PC-9 (cell line): ENCODE measurements at regions of chr2 and their contacts with region 1.

Region 1: GRCh38 chr2:178193823-178194599 is at the start of gene OSBPL6:
- DNase-seq: peak; percentile 63 to 93
- H3K4me3 ChIP-seq: peak within 1 kb of the TSS; percentile 93
- H3K27ac ChIP-seq: no peak within 1 kb of the TSS
- H3K4me1 ChIP-seq: peaks cover 16% of the 10 kb centered on the region
- H3K27me3 ChIP-seq: peaks cover 24% of the 10 kb centered on the region; the same call in 1 of the 2 replicates
- CTCF ChIP-seq: no peak; the same call in 1 of the 2 replicates
- total RNA-seq, gene OSBPL6: 2.6 and 3.5 TPM in 2 replicates

Region 2: DNA sequence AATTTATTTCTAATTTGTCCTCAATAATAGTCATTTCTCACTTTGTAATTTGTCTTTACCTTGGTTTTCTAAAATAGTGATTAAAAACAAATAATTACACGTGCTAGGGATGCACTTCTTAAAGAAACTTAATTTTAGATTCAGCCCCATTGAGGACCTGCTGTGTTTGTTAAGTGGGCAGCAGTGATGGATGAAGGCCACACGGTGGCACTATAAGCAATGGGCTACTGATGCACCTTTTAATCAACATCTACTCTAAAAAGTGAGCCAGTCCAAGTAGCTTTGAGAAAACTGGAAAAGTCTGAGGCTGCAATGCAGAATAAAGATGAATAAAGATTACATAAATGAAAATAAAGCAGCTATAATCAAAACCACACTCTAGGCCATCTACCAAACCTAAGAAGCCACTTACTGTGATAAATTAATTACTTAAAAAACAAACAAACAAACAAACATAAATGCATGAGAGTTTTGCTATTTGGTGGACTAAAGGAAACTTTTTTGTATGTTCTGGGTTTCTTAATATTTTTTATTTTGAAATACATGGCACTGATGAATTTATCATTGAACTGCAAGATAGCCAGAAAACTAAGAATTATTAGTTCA is 210.7 kb before region 1 on chr2:
- CTCF ChIA-PET with region 1: no interaction called
- POLR2A ChIA-PET with region 1: no interaction called
- intact Hi-C with region 1: loop called (anchors 10 kb)
- DNase-seq: peak; percentile 43 to 56
- H3K4me3 ChIP-seq: no peak overlapping the region
- H3K27ac ChIP-seq: no peak overlapping the region
- H3K4me1 ChIP-seq: no peaks in the 10 kb centered on the region
- H3K27me3 ChIP-seq: no peaks in the 10 kb centered on the region
- CTCF ChIP-seq: peak; percentile 96

Region 3: DNA sequence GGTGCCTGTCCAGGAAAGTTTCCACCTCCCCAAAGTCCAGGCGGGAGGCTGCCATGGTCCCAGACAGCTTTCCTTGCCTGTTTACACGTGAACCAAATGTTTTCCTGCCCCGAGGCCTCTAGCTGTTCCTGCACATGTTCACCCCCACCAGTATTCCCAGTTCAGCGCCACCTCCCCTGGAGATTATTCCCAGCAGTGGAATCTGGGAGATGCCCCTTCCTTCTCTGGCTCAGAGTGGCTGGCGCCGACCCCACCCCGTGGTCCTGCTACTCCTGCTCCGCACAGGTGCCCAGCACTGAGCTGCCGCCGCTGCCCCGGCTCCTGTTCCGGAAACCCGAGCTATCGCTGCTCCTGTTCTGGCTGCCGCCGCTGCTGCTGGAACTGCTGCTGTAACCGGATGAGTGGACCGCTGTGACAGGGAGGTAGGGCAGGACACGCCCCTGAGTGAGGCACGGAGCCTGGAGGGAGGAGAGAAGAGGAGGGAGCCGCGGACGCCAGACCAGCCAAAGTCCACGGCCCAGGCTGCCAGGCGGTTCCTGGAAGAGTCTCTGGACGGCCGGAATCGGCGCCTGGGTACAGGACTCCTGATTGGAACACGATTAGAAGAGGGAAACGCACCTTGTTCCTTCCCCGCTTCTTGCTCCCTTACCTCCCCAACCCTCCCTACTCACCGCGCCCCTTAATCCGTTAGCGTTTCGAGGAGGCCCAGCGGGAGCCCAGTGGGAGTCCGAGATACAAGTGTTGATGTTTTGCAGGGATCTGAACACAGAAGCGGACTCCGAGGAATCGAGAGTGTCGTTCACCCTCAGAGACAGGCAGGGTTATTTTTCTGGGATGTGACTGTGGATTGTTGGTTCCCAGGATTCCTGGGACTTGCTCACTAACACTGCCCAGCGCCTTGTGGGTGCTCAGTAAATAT is 121.4 kb before region 1 on chr2 and contains the start of gene PDE11A:
- CTCF ChIA-PET with region 1: interaction called, 3 read pairs
- POLR2A ChIA-PET with region 1: no interaction called
- intact Hi-C with region 1: loop called (anchors 10 kb)
- DNase-seq: peak; percentile 85 to 94
- H3K4me3 ChIP-seq: peak within 1 kb of the TSS; percentile 64
- H3K27ac ChIP-seq: no peak within 1 kb of the TSS
- H3K4me1 ChIP-seq: peaks cover 27% of the 10 kb centered on the region
- H3K27me3 ChIP-seq: no peaks in the 10 kb centered on the region
- CTCF ChIP-seq: no peak
- total RNA-seq, gene PDE11A: 1.1 and 1.4 TPM in 2 replicates

Region 4: GRCh38 chr2:178128836-178129630 is 65.0 kb before region 1 on chr2:
- CTCF ChIA-PET with region 1: no interaction called
- POLR2A ChIA-PET with region 1: no interaction called
- intact Hi-C with region 1: loop called (anchors 2 kb)
- DNase-seq: no peak
- H3K4me3 ChIP-seq: no peak overlapping the region
- H3K27ac ChIP-seq: no peak overlapping the region
- H3K4me1 ChIP-seq: peaks cover 13% of the 10 kb centered on the region
- H3K27me3 ChIP-seq: no peaks in the 10 kb centered on the region
- CTCF ChIP-seq: no peak

Region 5: DNA sequence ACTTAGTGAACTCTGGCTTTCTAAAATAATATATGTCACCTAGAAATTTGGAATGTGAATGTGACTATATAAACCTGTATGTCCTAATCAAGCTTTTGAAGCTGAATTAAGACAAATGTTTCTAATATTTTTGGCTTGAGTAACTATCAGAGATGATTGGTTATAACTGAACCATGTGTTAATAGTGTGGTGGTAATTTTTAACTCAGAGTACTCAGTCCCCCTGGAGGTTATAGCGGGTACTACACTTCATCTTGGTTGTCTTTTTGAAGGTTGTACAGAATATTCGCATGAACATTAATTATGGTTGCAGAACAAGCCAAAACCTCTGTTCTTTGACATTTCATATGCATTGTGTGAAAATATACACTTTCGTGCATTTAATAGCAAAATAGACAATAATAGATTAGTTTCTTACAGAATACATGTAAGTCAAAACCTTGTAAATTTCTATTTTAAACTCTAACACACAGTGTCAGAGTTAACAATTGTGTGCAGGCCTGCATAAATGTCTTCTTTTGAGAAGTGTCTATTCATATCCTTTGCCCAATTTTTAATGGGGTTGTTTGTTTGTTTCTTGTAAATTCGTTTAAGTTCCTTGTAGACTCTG is 86.3 kb after region 1 on chr2:
- CTCF ChIA-PET with region 1: interaction called, 4 read pairs
- POLR2A ChIA-PET with region 1: interaction called, 3 read pairs
- intact Hi-C with region 1: loop called (anchors 5 kb)
- DNase-seq: peak; percentile 19 to 66
- H3K4me3 ChIP-seq: no peak overlapping the region
- H3K27ac ChIP-seq: no peak overlapping the region
- H3K4me1 ChIP-seq: 0 out of 2 replicates have a peak, but pooled peaks cover 7% of the 10 kb centered on the region
- H3K27me3 ChIP-seq: no peaks in the 10 kb centered on the region
- CTCF ChIP-seq: peak; percentile 95

Region 6: GRCh38 chr2:178397002-178397605 is 203.1 kb after region 1 on chr2:
- CTCF ChIA-PET with region 1: no interaction called
- POLR2A ChIA-PET with region 1: no interaction called
- intact Hi-C with region 1: loop called (anchors 5 kb)
- DNase-seq: no peak
- H3K4me3 ChIP-seq: no peak overlapping the region
- H3K27ac ChIP-seq: no peak overlapping the region
- H3K4me1 ChIP-seq: no peaks in the 10 kb centered on the region
- H3K27me3 ChIP-seq: no peaks in the 10 kb centered on the region
- CTCF ChIP-seq: peak; percentile 94